SK-N-SH (cell line): ENCODE measurements at regions of chr11 and their contacts with region 1.

Region 1: GRCh38 chr11:1572197-1573076 is at the start of gene DUSP8:
- DNase-seq: peak; percentile 98
- H3K4me3 ChIP-seq: peak within 1 kb of the TSS; percentile 57 to 64
- H3K27ac ChIP-seq: peak within 1 kb of the TSS in 1 of 2 experiments; percentile 81; a peak in 2 of 4 replicates
- H3K4me1 ChIP-seq: peaks cover 0 to 33% of the 10 kb centered on the region in 2 experiments; a peak in 1 of 4 replicates
- H3K27me3 ChIP-seq: peaks cover 4% of the 10 kb centered on the region; the same call in 1 of the 2 replicates
- CTCF ChIP-seq: no peak
- EP300 ChIP-seq: no peak
- RAD21 ChIP-seq: no peak
- polyA plus RNA-seq, gene DUSP8: 2.0 and 2.2 TPM in 2 replicates

Region 2: DNA sequence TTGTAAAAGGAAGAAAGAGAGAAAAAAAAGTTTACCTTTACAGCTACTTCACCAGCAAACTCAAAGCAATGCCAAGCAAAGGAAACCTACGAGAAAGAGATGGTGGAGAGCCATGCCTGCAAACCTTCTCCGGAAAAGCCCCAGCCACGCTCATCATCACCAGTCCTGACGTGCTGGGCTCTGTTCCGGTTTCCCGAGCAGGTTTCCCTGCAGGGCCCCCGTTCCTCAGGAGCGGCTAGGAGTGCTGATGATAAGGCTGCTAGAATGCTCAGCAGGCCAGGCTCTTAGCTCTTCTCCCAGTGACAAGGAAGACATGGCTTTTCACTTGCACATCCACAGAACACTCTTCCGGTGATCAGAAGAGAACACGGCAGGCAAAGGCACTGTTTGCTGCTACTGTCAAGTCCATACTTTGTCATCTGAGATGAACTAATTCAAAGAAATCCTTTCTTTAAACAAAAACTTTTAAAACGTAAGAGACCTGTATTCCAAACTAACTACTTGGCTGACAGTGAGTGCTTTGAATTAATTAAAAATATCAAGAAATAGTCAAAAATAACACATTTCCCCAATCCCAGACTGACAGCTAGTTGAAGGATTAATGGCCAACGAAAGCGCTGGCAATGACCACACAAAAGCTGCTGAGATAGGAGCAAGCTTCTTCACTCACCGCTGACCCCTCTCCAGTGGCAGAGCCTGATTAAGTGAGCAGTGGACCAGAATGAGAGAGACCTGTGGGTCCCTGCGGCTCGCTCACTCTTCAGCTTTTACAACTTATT is 36.2 kb before region 1 on chr11:
- CTCF ChIA-PET with region 1: interaction called, 398 read pairs
- POLR2A ChIA-PET with region 1: no interaction called
- DNase-seq: no peak
- H3K4me3 ChIP-seq: no peak overlapping the region
- H3K27ac ChIP-seq: no peak overlapping the region
- H3K4me1 ChIP-seq: peaks cover 0 to 16% of the 10 kb centered on the region in 2 experiments; a peak in 1 of 4 replicates
- H3K27me3 ChIP-seq: peaks cover 7% of the 10 kb centered on the region; the same call in 1 of the 2 replicates
- CTCF ChIP-seq: no peak
- EP300 ChIP-seq: no peak
- RAD21 ChIP-seq: no peak

Region 3: DNA sequence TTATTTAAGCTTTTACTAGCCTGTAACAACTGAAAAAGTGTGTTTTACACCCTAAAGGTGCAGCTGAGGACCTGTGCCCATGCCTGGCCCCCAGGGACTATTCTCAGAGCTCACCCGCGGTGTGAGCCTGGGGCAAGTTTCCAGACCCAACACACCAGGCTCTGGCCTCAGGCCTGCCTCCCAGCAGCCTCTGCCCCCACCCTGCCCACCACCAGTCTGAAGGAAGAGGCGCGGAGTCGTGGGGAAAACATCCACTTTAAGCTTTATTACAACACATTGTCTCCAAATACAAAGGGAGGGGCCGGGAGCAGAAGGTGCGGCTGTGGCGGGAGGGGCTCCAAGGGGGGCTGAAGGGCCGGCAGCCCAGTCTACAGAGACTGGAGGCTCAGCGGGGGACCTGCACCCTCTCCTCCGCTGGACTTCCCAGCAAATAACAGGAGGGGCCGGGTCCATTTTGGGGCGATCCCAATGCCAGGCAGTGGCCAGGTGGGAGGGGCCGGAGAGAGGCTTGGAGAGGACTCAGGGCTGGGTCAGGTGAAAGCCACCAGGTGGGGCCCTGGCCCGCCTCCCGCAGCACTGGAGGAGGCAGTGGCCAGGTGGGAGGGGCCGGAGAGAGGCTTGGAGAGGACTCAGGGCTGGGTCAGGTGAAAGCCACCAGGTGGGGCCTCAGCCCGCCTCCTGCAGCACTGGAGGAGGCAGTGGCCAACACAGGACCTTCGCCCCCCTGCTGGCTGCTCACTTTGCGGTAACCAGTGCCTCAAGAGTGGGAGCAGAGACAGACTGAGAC is 18.4 kb before region 1 on chr11:
- CTCF ChIA-PET with region 1: interaction called, 398 read pairs
- POLR2A ChIA-PET with region 1: interaction called, 4 read pairs
- DNase-seq: no peak
- H3K4me3 ChIP-seq: no peak overlapping the region
- H3K27ac ChIP-seq: no peak overlapping the region
- H3K4me1 ChIP-seq: peaks cover 0 to 8% of the 10 kb centered on the region in 2 experiments; a peak in 1 of 4 replicates
- H3K27me3 ChIP-seq: no peaks in the 10 kb centered on the region
- CTCF ChIP-seq: no peak
- EP300 ChIP-seq: no peak
- RAD21 ChIP-seq: no peak

Region 4: GRCh38 chr11:1586699-1587098 is 14.3 kb after region 1 on chr11:
- CTCF ChIA-PET with region 1: interaction called, 64 read pairs
- POLR2A ChIA-PET with region 1: no interaction called
- DNase-seq: no peak
- H3K4me3 ChIP-seq: no peak overlapping the region
- H3K27ac ChIP-seq: no peak overlapping the region
- H3K4me1 ChIP-seq: no peaks in the 10 kb centered on the region
- H3K27me3 ChIP-seq: no peaks in the 10 kb centered on the region; the same call in 1 of the 2 replicates
- CTCF ChIP-seq: no peak
- EP300 ChIP-seq: no peak
- RAD21 ChIP-seq: no peak

Region 5: GRCh38 chr11:1598816-1599215 is 26.4 kb after region 1 on chr11:
- CTCF ChIA-PET with region 1: interaction called, 64 read pairs
- POLR2A ChIA-PET with region 1: no interaction called
- DNase-seq: no peak
- H3K4me3 ChIP-seq: no peak overlapping the region
- H3K27ac ChIP-seq: no peak overlapping the region
- H3K4me1 ChIP-seq: no peaks in the 10 kb centered on the region
- H3K27me3 ChIP-seq: peaks cover 22% of the 10 kb centered on the region
- CTCF ChIP-seq: no peak
- EP300 ChIP-seq: no peak
- RAD21 ChIP-seq: no peak

Region 6: GRCh38 chr11:1640076-1640946 is 67.9 kb after region 1 on chr11:
- CTCF ChIA-PET with region 1: interaction called, 31 read pairs
- POLR2A ChIA-PET with region 1: no interaction called
- DNase-seq: peak; percentile 86
- H3K4me3 ChIP-seq: no peak overlapping the region; a peak in 1 of 4 replicates
- H3K27ac ChIP-seq: no peak overlapping the region; a peak in 1 of 4 replicates
- H3K4me1 ChIP-seq: peaks cover 0 to 25% of the 10 kb centered on the region in 2 experiments; a peak in 1 of 4 replicates
- H3K27me3 ChIP-seq: no peaks in the 10 kb centered on the region
- CTCF ChIP-seq: peak; percentile 82
- EP300 ChIP-seq: no peak
- RAD21 ChIP-seq: peak; percentile 14; the same call in 1 of the 2 replicates

Region 7: GRCh38 chr11:1803246-1803645 is 230.8 kb after region 1 on chr11:
- CTCF ChIA-PET with region 1: no interaction called
- POLR2A ChIA-PET with region 1: no interaction called
- DNase-seq: no peak
- H3K4me3 ChIP-seq: no peak overlapping the region
- H3K27ac ChIP-seq: no peak overlapping the region
- H3K4me1 ChIP-seq: no peaks in the 10 kb centered on the region
- H3K27me3 ChIP-seq: no peaks in the 10 kb centered on the region; the same call in 1 of the 2 replicates
- CTCF ChIP-seq: no peak
- EP300 ChIP-seq: no peak
- RAD21 ChIP-seq: no peak